ENCODE measurements at regions of chr1 and their contacts with region 1.

Region 1: DNA sequence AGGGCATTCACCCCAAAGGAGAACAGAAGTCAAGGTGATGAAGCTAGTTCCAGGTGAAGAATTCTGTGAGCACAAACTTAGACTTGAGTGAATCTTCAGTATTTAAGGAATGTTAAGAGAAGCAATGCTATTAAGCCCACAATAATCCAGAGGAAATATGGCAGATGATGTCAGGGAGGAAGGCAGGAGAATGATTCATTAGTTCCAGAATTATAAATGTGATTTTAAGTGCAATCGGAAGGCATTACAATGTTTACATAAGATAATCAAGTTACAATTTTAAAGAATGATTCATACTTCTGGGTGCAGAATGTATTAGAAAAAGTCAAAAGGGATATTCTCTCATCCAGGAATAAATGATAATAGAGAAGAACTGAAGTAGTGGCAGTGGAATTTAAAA is 545.2 kb upstream of the BRINP3 start:
- DNase-seq: peak; percentile 91
- H3K4me3 ChIP-seq: no peak overlapping the region
- H3K27ac ChIP-seq: peak overlapping the region; percentile 80
- H3K4me1 ChIP-seq: peaks cover 28% of the 10 kb centered on the region
- H3K27me3 ChIP-seq: no peaks in the 10 kb centered on the region
- CTCF ChIP-seq: no peak
- POLR2A ChIP-seq: peak; percentile 32

Region 2: DNA sequence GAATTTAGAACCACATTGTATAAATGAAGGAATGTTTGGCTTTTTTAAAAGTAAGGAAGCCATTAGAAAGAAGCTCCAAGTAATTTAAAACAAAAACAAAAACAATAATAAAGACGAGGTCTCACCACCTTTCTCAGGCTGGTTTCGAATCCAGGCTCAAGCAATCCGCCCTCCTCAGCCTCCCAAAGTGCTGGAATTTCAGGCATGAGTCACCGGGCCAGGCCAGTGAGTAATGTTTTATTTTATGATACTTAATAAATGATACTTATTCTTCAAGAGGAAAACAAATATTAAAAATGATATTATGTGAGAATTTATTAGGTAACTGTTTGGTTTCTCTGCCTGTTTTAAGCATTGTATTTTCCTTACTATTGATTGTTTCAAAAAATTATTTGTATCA is 343.8 kb before region 1 on chr1:
- CTCF ChIA-PET with region 1: no interaction called
- POLR2A ChIA-PET with region 1: no interaction called
- dilution Hi-C with region 1: no loop called
- intact Hi-C with region 1: loop called (anchors 1 kb)
- DNase-seq: peak; percentile 35
- H3K4me3 ChIP-seq: no peak overlapping the region
- H3K27ac ChIP-seq: peak overlapping the region; percentile 38
- H3K4me1 ChIP-seq: no peaks in the 10 kb centered on the region
- H3K27me3 ChIP-seq: no peaks in the 10 kb centered on the region
- CTCF ChIP-seq: no peak
- POLR2A ChIP-seq: no peak

Region 3: GRCh38 chr1:191052888-191053287 is 30.0 kb after region 1 on chr1:
- CTCF ChIA-PET with region 1: no interaction called
- POLR2A ChIA-PET with region 1: no interaction called
- dilution Hi-C with region 1: no loop called
- intact Hi-C with region 1: no loop called
- DNase-seq: no peak
- H3K4me3 ChIP-seq: no peak overlapping the region
- H3K27ac ChIP-seq: no peak overlapping the region
- H3K4me1 ChIP-seq: no peaks in the 10 kb centered on the region
- H3K27me3 ChIP-seq: no peaks in the 10 kb centered on the region
- CTCF ChIP-seq: no peak
- POLR2A ChIP-seq: no peak

Region 4: GRCh38 chr1:191134796-191135195 is 111.9 kb after region 1 on chr1:
- CTCF ChIA-PET with region 1: no interaction called
- POLR2A ChIA-PET with region 1: no interaction called
- dilution Hi-C with region 1: no loop called
- intact Hi-C with region 1: loop called (anchors 2 kb)
- DNase-seq: peak; percentile 77
- H3K4me3 ChIP-seq: no peak overlapping the region
- H3K27ac ChIP-seq: peak overlapping the region; percentile 52
- H3K4me1 ChIP-seq: peaks cover 15% of the 10 kb centered on the region
- H3K27me3 ChIP-seq: no peaks in the 10 kb centered on the region
- CTCF ChIP-seq: no peak
- POLR2A ChIP-seq: no peak

Measured in endothelial cell of umbilical vein (primary cell).